Activated naive CD8-positive, alpha-beta T cell treated with anti-CD3 and anti-CD28 coated beads, Interleukin-2, amount 10 ng/mL, durations not matched to agents 7 days and 5 days (primary cell): ENCODE measurements at regions of chr20 and their contacts with region 1.

Region 1: GRCh38 chr20:48738399-48739304 is 89.1 kb downstream of the PREX1 start:
- DNase-seq: peak; percentile 68
- ATAC-seq: peak; percentile 89
- H3K4me3 Mint-ChIP-seq: peak overlapping the region; percentile 73
- H3K27ac Mint-ChIP-seq: peak overlapping the region; percentile 94
- H3K4me1 Mint-ChIP-seq: peaks cover 62% of the 10 kb centered on the region
- H3K27me3 Mint-ChIP-seq: no peaks in the 10 kb centered on the region

Region 2: GRCh38 chr20:48673556-48673955 is 65.1 kb before region 1 on chr20:
- POLR2A ChIA-PET with region 1: no interaction called
- DNase-seq: no peak
- ATAC-seq: no peak
- H3K4me3 Mint-ChIP-seq: no peak overlapping the region
- H3K27ac Mint-ChIP-seq: peak overlapping the region; percentile 14
- H3K4me1 Mint-ChIP-seq: peaks cover 6% of the 10 kb centered on the region
- H3K27me3 Mint-ChIP-seq: no peaks in the 10 kb centered on the region

Region 3: GRCh38 chr20:48723308-48724264 is 15.1 kb before region 1 on chr20:
- POLR2A ChIA-PET with region 1: interaction called, 67 read pairs
- DNase-seq: no peak
- ATAC-seq: no peak
- H3K4me3 Mint-ChIP-seq: no peak overlapping the region
- H3K27ac Mint-ChIP-seq: peak overlapping the region; percentile 91
- H3K4me1 Mint-ChIP-seq: peaks cover 63% of the 10 kb centered on the region
- H3K27me3 Mint-ChIP-seq: no peaks in the 10 kb centered on the region

Region 4: DNA sequence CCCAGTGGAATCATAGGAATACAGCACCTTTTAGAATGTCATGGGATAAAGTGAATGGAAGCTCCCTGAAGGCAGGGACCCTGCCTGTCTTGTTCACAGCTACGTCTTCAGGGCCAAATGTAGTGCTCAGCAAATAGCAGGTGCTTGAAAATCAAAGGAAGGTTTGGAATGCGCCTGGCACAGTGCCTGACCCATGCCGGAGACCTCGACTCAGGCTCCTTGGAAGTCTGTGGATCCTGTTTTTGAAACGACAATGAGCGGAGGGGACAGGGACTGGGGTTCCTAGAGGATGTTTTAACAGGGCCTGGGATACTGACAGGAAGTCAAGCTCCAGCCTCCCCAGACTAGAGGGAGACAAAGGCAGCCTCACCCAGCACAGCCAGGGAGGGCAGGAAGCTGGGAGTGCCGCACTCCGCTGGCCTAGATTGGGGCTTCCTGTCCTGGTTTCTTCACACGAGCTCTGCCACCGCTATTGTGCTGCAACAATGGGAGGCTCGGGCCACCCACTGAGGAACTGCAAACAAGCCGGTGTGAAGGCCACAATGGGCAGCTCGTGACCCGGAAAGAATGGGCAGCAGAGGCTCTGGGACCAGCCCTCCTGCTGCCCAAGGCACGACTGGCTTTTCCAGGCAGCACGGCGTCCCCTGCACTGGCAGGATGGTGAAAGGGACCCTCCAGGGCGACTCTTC is 12.4 kb after region 1 on chr20:
- POLR2A ChIA-PET with region 1: interaction called, 36 read pairs
- DNase-seq: peak; percentile 60
- ATAC-seq: peak; percentile 87
- H3K4me3 Mint-ChIP-seq: peak overlapping the region; percentile 75
- H3K27ac Mint-ChIP-seq: peak overlapping the region; percentile 91
- H3K4me1 Mint-ChIP-seq: peaks cover 60% of the 10 kb centered on the region
- H3K27me3 Mint-ChIP-seq: no peaks in the 10 kb centered on the region

Region 5: GRCh38 chr20:48818407-48818987 is 79.8 kb after region 1 on chr20:
- POLR2A ChIA-PET with region 1: interaction called, 11 read pairs
- DNase-seq: peak; percentile 62
- ATAC-seq: peak; percentile 80
- H3K4me3 Mint-ChIP-seq: peak overlapping the region; percentile 64
- H3K27ac Mint-ChIP-seq: peak overlapping the region; percentile 82
- H3K4me1 Mint-ChIP-seq: peaks cover 81% of the 10 kb centered on the region
- H3K27me3 Mint-ChIP-seq: no peaks in the 10 kb centered on the region

Region 6: GRCh38 chr20:48921899-48922821 is 183.5 kb after region 1 on chr20:
- POLR2A ChIA-PET with region 1: no interaction called
- DNase-seq: no peak
- ATAC-seq: peak; percentile 54
- H3K4me3 Mint-ChIP-seq: peak overlapping the region; percentile 94
- H3K27ac Mint-ChIP-seq: peak overlapping the region; percentile 89
- H3K4me1 Mint-ChIP-seq: peaks cover 38% of the 10 kb centered on the region
- H3K27me3 Mint-ChIP-seq: peaks cover 2% of the 10 kb centered on the region